T-cell (primary cell): ENCODE measurements at regions of chr16 and their contacts with region 1.

Region 1: GRCh38 chr16:31899505-31899904 is 25.9 kb downstream of the ZNF267 start:
- DNase-seq: no peak
- ATAC-seq: no peak
- H3K4me3 ChIP-seq: no peak overlapping the region
- H3K4me3 Mint-ChIP-seq: peak overlapping the region in 2 of 3 donors; percentile 2 to 44
- H3K27ac ChIP-seq: no peak overlapping the region
- H3K27ac Mint-ChIP-seq: peak overlapping the region; percentile 70 to 80
- H3K4me1 ChIP-seq: no peaks in the 10 kb centered on the region
- H3K4me1 Mint-ChIP-seq: peaks cover 27 to 51% (median 34%) of the 10 kb centered on the region in 3 donors
- H3K27me3 ChIP-seq: no peaks in the 10 kb centered on the region
- H3K27me3 Mint-ChIP-seq: no peaks in the 10 kb centered on the region

Region 2: GRCh38 chr16:31471875-31472708 is 427.4 kb before region 1 on chr16 and contains the start of gene TGFB1I1:
- CTCF ChIA-PET with region 1: no interaction called
- POLR2A ChIA-PET with region 1: interaction called in 1 of 2 experiments, 12 read pairs
- DNase-seq: no peak
- ATAC-seq: no peak
- H3K4me3 ChIP-seq: peak within 1 kb of the TSS; percentile 18 to 41
- H3K4me3 Mint-ChIP-seq: peak within 1 kb of the TSS; percentile 63 to 71 (median 63)
- H3K27ac ChIP-seq: no peak within 1 kb of the TSS
- H3K27ac Mint-ChIP-seq: peak within 1 kb of the TSS; percentile 15 to 68
- H3K4me1 ChIP-seq: peaks cover 4 to 34% of the 10 kb centered on the region in 2 experiments
- H3K4me1 Mint-ChIP-seq: peaks cover 16 to 27% (median 24%) of the 10 kb centered on the region in 3 donors
- H3K27me3 ChIP-seq: peaks cover 0 to 33% of the 10 kb centered on the region in 2 experiments
- H3K27me3 Mint-ChIP-seq: peaks cover 6 to 18% of the 10 kb centered on the region in 2 donors
- total RNA-seq, gene TGFB1I1: 0.40 to 1.1 (median 0.72) TPM

Region 3: GRCh38 chr16:31853300-31853699 is 46.2 kb before region 1 on chr16:
- CTCF ChIA-PET with region 1: no interaction called
- POLR2A ChIA-PET with region 1: no interaction called
- DNase-seq: no peak
- ATAC-seq: no peak
- H3K4me3 ChIP-seq: no peak overlapping the region
- H3K4me3 Mint-ChIP-seq: no peak overlapping the region
- H3K27ac ChIP-seq: no peak overlapping the region
- H3K27ac Mint-ChIP-seq: no peak overlapping the region
- H3K4me1 ChIP-seq: no peaks in the 10 kb centered on the region
- H3K4me1 Mint-ChIP-seq: no peaks in the 10 kb centered on the region
- H3K27me3 ChIP-seq: peaks cover 0 to 9% of the 10 kb centered on the region in 2 experiments
- H3K27me3 Mint-ChIP-seq: peaks cover 0 to 4% of the 10 kb centered on the region in 2 donors